Activated CD4-positive, alpha-beta memory T cell treated with anti-CD3 and anti-CD28 coated beads, Interleukin-2, amount 10 ng/mL, durations not matched to agents 7 days and 5 days (primary cell): ENCODE measurements at regions of chr3 and their contacts with region 1.

Region 1: DNA sequence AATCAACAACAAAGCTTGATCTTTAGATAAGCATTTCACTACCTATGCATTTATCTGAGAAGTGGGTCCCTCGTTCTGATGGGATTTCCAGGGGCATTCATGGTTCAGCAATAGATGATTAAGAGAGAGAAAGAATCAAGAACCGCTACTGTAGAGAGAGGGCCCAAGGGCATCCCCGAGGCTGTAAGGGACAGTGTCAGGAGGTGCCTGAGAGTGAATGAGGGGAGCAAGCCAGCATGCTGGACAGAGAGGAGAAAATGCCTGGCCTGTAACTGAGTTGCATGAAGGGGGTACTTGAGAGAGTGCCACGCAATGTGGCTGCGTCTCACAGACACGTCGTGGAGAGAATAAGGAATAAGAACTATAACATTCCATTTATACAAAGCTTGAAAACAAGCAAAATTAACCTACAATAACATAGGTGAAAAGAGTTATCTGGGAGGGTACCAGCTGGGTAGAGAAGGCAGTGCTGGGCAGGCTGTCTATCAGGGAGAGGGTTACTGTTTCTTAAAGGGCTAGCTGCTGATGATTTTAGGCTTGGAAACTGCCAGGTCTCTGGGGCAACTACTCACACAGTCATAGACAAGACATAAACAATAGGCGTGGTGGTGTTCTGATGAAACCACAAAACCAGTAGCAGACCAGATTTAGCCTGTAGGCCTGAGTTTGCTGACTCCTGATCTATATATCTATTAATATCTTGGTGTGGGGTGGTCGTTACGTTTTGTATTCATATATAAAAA is 374.6 kb upstream of the CFAP20DC start:
- DNase-seq: peak; percentile 38
- H3K4me3 Mint-ChIP-seq: no peak overlapping the region
- H3K27ac Mint-ChIP-seq: peak overlapping the region; percentile 61
- H3K4me1 Mint-ChIP-seq: peaks cover 60% of the 10 kb centered on the region
- H3K27me3 Mint-ChIP-seq: peaks cover 4% of the 10 kb centered on the region

Region 2: GRCh38 chr3:59386165-59386564 is 38.3 kb before region 1 on chr3:
- CTCF ChIA-PET with region 1: interaction called, 3 read pairs
- POLR2A ChIA-PET with region 1: interaction called, 10 read pairs
- DNase-seq: no peak
- H3K4me3 Mint-ChIP-seq: peak overlapping the region; percentile 33
- H3K27ac Mint-ChIP-seq: peak overlapping the region; percentile 90
- H3K4me1 Mint-ChIP-seq: peaks cover 70% of the 10 kb centered on the region
- H3K27me3 Mint-ChIP-seq: no peaks in the 10 kb centered on the region

Region 3: DNA sequence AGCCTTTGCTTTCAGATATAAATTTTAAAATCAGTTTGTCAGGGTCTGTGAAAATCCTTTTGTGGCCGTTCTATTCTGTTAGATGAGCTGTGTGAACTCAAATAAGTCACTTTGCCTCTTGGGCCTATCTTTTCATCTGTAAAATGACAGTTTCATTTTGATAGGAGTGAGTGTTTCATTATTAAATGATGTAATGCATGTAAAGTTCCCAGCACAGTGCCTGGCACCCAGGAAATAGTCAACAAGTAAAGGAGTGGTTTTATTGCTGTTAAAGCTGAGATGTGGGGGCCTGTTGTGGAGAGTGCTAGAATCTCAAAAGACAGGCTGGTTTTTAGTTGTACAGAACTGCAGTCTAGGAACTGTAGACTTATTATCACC is 19.8 kb after region 1 on chr3:
- CTCF ChIA-PET with region 1: interaction called, 3 read pairs
- POLR2A ChIA-PET with region 1: interaction called, 56 read pairs
- DNase-seq: peak; percentile 32
- H3K4me3 Mint-ChIP-seq: peak overlapping the region; percentile 21
- H3K27ac Mint-ChIP-seq: peak overlapping the region; percentile 84
- H3K4me1 Mint-ChIP-seq: peaks cover 45% of the 10 kb centered on the region
- H3K27me3 Mint-ChIP-seq: no peaks in the 10 kb centered on the region

Region 4: DNA sequence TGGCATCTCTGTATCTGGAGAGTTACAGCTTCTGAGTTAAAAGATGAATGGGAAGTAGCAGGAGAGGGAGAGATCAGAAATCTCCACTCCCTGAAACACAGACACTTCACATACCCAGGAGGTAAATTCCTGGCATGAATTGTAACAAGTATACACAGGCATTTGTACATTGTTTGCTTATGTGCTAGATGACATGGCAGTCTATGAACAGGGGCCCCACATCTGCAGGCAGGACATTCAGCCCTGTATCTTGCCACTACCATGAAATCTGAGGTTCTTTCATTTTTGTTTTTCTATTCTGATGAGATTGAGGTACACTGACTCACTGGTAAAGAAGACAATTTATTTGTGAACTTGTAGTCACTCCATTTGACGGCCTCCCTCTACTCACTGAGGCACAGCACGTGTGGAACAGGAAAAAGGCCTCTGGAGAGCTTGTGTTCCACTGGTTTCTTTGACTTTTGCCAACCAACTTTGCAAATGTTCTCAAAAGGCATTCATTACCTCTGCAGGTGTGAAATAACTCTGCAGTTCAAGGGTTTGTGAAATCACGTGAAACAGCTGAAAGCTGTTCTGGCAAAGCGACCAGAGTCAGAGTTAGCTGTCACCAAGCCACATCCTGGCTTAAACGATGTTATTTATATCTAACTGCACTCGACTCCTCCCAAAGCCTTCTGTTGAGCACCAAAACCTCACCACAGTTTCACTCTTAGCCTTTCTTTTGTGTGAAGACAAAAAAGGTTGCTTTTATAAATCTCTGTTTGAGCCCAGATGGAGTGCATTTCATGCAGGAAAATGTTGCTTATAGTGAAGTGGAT is 26.7 kb after region 1 on chr3:
- CTCF ChIA-PET with region 1: interaction called, 5 read pairs
- POLR2A ChIA-PET with region 1: interaction called, 56 read pairs
- DNase-seq: peak; percentile 77
- H3K4me3 Mint-ChIP-seq: peak overlapping the region; percentile 60
- H3K27ac Mint-ChIP-seq: peak overlapping the region; percentile 99
- H3K4me1 Mint-ChIP-seq: peaks cover 63% of the 10 kb centered on the region
- H3K27me3 Mint-ChIP-seq: peaks cover 2% of the 10 kb centered on the region